Activated CD4-positive, alpha-beta memory T cell treated with anti-CD3 and anti-CD28 coated beads for 36 hours (primary cell): ENCODE measurements at regions of chr7 and their contacts with region 1.

Region 1: DNA sequence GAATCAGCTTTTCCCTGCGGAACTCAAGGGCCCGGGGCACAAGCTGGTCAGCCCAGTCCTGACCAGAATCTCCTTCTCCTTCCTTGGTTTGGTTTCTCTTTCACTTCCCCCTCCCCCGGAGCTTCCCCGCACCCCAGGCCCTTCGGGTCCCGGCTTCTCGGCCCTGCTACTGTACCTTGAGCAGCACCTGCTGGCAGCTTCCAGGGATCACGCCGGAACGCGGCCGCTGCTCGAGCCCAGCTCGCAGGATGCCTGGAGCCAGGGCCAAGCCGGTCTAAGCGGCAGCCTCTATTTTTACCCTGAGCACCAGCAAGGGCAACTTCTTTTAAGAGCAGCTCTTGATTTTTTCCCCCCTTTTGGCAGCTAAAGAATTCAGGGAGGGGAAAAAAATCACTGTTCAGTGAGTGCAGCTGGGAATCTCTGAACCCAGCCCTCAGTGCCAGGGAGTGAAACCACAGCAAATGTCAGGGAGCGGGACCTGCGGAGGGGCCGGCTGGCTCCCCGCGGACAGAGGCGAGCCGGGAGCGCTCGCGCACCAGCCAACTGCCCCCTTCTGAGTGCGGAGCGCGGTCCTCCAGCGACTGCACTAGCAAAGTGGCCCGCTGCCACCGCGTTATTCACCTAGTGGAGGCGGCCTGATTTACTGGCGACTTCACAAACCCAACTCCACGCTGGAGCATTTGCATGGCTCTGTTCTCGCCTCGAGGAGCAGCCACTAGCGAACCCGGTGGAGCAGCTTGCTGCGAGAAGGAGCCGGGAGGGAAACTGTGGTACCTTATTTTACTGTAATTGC is 2.4 kb upstream of the INHBA start:
- DNase-seq: peak; percentile 66
- H3K4me3 Mint-ChIP-seq: peak overlapping the region; percentile 55
- H3K27ac Mint-ChIP-seq: no peak overlapping the region
- H3K4me1 Mint-ChIP-seq: peaks cover 14% of the 10 kb centered on the region
- H3K27me3 Mint-ChIP-seq: peaks cover 29% of the 10 kb centered on the region

Region 2: GRCh38 chr7:40232242-40232893 is 1472.9 kb before region 1 on chr7:
- CTCF ChIA-PET with region 1: no interaction called
- POLR2A ChIA-PET with region 1: no interaction called
- intact Hi-C with region 1: loop called (anchors 2 kb)
- DNase-seq: no peak
- H3K4me3 Mint-ChIP-seq: no peak overlapping the region
- H3K27ac Mint-ChIP-seq: no peak overlapping the region
- H3K4me1 Mint-ChIP-seq: no peaks in the 10 kb centered on the region
- H3K27me3 Mint-ChIP-seq: peaks cover 2% of the 10 kb centered on the region

Region 3: GRCh38 chr7:41003031-41003925 is 702.0 kb before region 1 on chr7:
- CTCF ChIA-PET with region 1: interaction called, 4 read pairs
- POLR2A ChIA-PET with region 1: no interaction called
- intact Hi-C with region 1: loop called (anchors 2 kb)
- DNase-seq: peak; percentile 38
- H3K4me3 Mint-ChIP-seq: no peak overlapping the region
- H3K27ac Mint-ChIP-seq: no peak overlapping the region
- H3K4me1 Mint-ChIP-seq: no peaks in the 10 kb centered on the region
- H3K27me3 Mint-ChIP-seq: no peaks in the 10 kb centered on the region